CD8-positive, alpha-beta T cell (primary cell): ENCODE measurements at regions of chr5 and their contacts with region 1.

Region 1: DNA sequence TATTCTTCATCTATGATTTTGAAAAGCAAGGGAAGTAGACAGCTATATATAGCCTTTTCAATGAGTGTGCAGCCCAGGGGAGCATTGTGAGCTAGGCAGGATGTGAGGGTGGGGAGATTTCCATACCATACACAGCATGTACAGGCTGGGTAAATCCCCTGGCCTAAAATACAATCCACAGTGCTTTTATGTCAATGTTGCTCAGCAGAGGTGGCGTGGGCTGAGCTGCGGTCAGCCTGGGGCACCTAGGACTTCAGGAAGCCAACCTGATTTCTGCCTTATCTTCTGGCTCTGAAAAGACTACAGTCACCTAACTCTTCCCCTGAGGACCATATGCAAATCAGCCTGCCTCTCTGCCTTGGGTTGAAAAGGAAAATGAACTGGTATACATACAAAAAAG is 6.3 kb upstream of the GARIN3 start:
- DNase-seq: peak in 8 of 9 experiments; percentile 40 to 93 (median 66)
- ATAC-seq: peak; percentile 96
- H3K4me3 ChIP-seq: peak overlapping the region in 1 of 2 experiments; percentile 4
- H3K4me3 Mint-ChIP-seq: peak overlapping the region; percentile 46
- H3K27ac ChIP-seq: peak overlapping the region; percentile 4 to 59
- H3K27ac Mint-ChIP-seq: peak overlapping the region; percentile 92
- H3K4me1 ChIP-seq: peaks cover 40% of the 10 kb centered on the region
- H3K4me1 Mint-ChIP-seq: peaks cover 65% of the 10 kb centered on the region
- H3K27me3 ChIP-seq: no peaks in the 10 kb centered on the region
- H3K27me3 Mint-ChIP-seq: no peaks in the 10 kb centered on the region
- CTCF ChIP-seq: no peak

Region 2: DNA sequence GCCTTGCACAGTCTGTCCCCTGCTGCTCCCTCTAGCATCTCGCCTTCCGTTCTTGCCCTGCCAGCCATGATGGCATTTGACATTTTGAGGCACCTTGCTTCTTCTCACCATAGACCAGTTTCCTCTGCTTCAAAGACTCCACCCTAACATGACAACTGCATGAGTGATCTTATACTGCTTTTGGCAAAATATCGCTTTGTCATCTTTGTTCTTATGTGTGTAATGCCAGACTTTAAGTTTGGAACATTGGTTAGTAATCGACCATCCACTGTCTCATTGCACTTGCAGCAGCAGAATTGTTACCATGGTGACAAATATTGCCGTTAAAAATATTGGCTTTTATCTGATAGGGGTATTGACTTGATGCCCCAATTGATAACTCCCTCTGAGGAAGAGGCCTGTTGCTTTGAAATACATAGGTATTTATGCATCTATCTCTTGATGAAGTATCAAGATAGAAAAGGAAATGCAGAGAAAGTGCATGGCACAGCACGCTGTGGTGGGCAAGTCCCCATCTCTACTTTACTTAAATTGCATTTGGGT is 13.1 kb before region 1 on chr5:
- CTCF ChIA-PET with region 1: interaction called, 4 read pairs
- POLR2A ChIA-PET with region 1: interaction called, 7 read pairs
- intact Hi-C with region 1: loop called in 1 of 2 experiments (anchors 1 kb)
- DNase-seq: peak in 6 of 9 experiments; percentile 29 to 72 (median 53)
- ATAC-seq: peak; percentile 81
- H3K4me3 ChIP-seq: no peak overlapping the region
- H3K4me3 Mint-ChIP-seq: peak overlapping the region; percentile 13
- H3K27ac ChIP-seq: peak overlapping the region; percentile 23 to 78
- H3K27ac Mint-ChIP-seq: peak overlapping the region; percentile 58
- H3K4me1 ChIP-seq: peaks cover 38% of the 10 kb centered on the region
- H3K4me1 Mint-ChIP-seq: peaks cover 62% of the 10 kb centered on the region
- H3K27me3 ChIP-seq: no peaks in the 10 kb centered on the region
- H3K27me3 Mint-ChIP-seq: no peaks in the 10 kb centered on the region
- CTCF ChIP-seq: no peak